ENCODE measurements at regions of chr13 and their contacts with region 1.

Region 1: GRCh38 chr13:48233046-48233907 is at the start of gene ITM2B:
- DNase-seq: peak; percentile 56 to 86 (median 76)
- H3K4me3 ChIP-seq: peak within 1 kb of the TSS; percentile 61 to 100 (median 94)
- H3K27ac ChIP-seq: peak within 1 kb of the TSS; percentile 90 to 100 (median 99)
- H3K27me3 ChIP-seq: no peaks in the 10 kb centered on the region
- CTCF ChIP-seq: peak in 45 of 56 donors; percentile 10 to 69 (median 44)
- total RNA-seq, gene ITM2B: 414 to 659 (median 555) TPM

Region 2: DNA sequence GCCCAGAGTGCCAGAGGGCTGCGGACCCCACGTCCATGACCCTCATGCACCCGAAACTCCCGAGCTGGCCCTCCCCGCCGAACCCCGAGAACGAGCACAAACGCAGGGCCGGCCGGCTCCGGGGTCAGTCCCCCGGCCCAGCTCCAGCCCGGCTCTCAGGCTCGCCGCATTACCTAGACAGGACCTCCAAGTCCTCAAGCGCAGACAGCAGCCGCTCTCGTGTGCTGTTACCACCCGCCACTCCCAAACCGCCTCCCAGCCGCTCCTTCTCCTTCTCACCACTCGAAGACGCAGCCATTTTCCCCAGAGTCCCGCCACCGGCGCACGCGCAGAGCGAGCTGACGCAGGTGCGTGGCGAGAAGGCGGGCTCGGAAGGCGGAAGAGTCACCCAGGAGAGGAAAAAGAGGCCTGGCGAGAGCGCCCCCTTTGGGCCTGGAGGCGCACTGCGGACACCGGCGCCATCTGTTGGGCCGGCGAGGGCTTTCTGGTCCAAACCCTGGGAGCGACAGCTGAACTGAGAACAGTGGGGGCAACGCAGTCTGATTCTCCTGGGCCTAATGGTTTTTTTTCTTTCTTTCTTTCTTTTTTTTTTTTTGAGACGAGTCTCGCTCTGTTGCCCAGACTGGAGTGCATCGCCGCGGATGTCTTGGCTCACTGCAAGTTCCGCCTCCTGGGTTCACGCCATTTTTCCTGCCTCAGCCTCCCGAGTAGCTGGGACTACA is 138.3 kb before region 1 on chr13 and contains the start of gene MED4:
- intact Hi-C with region 1: loop called (anchors 2 to 10 kb)
- DNase-seq: peak; percentile 88 to 98 (median 92)
- H3K4me3 ChIP-seq: peak within 1 kb of the TSS; percentile 57 to 100 (median 97)
- H3K27ac ChIP-seq: peak within 1 kb of the TSS in 57 of 59 donors; percentile 5 to 96 (median 80)
- H3K27me3 ChIP-seq: no peaks in the 10 kb centered on the region
- CTCF ChIP-seq: peak in 55 of 56 donors; percentile 99 to 100 (median 100)
- total RNA-seq, gene MED4: 25.6 to 57.8 (median 42.3) TPM

Region 3: DNA sequence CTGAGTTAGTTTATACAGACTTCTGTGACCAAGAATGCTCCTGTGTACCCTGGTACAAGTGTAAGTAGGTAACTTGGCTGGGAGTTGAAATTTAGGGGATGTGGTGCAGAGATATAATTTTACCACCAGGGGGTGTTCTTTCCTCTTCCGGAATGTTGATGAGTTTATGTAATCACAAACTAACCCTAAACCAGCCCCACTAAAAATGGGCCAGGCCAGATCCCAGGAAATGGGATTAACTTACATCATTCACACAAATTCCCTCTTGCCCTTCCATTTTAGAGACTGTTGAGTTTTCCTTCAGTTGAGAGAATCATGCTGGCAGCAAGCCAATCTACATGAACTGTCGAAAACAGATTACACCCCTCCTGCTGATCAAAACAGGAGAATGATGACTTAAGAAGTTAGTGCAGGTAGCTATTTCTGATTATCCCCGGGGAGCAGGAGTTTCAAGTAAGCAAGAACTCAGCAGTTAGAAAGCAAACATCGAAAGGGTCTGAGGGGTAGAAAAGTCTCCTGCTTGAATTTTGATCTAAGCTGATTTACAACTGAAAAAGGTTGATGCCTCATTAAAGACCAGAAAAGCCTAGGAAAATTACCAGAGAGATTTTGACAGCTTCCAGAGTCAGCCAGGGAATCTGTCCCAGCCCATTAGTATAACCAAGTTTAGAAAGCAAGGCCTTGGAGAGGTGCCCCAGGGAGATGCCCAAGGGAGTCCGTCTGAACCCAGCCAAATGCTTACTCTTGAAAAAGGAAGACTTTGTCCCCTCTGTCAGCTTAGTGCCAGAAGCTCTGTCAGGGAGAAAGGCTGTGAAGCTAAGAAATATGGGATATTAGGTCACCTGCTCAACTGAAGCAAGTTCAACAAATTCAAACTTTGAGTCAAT is 106.1 kb before region 1 on chr13:
- intact Hi-C with region 1: loop called in 1 of 2 experiments (anchors 1 kb)
- DNase-seq: peak in 2 of 10 donors; percentile 31 to 80
- H3K4me3 ChIP-seq: peak overlapping the region in 16 of 59 donors; percentile 0 to 39 (median 14)
- H3K27ac ChIP-seq: peak overlapping the region in 53 of 59 donors; percentile 1 to 89 (median 69)
- H3K27me3 ChIP-seq: no peaks in the 10 kb centered on the region
- CTCF ChIP-seq: peak; percentile 66 to 98 (median 84)

Measured in dorsolateral prefrontal cortex (tissue), 120 donors.